Mammary epithelial cell (primary cell): ENCODE measurements at regions of chr1 and their contacts with region 1.

Region 1: GRCh38 chr1:90391126-90391525 is 326.0 kb downstream of the BARHL2 start:
- DNase-seq: peak; percentile 46
- H3K4me3 ChIP-seq: no peak overlapping the region
- H3K27ac ChIP-seq: no peak overlapping the region
- H3K4me1 ChIP-seq: peaks cover 22% of the 10 kb centered on the region
- H3K27me3 ChIP-seq: no peaks in the 10 kb centered on the region
- CTCF ChIP-seq: no peak

Region 2: GRCh38 chr1:90340606-90341005 is 50.5 kb before region 1 on chr1:
- CTCF ChIA-PET with region 1: no interaction called
- dilution Hi-C with region 1: no loop called
- in situ Hi-C with region 1: no loop called
- intact Hi-C with region 1: no loop called
- DNase-seq: no peak
- H3K4me3 ChIP-seq: no peak overlapping the region
- H3K27ac ChIP-seq: no peak overlapping the region
- H3K4me1 ChIP-seq: no peaks in the 10 kb centered on the region
- H3K27me3 ChIP-seq: no peaks in the 10 kb centered on the region
- CTCF ChIP-seq: no peak

Region 3: DNA sequence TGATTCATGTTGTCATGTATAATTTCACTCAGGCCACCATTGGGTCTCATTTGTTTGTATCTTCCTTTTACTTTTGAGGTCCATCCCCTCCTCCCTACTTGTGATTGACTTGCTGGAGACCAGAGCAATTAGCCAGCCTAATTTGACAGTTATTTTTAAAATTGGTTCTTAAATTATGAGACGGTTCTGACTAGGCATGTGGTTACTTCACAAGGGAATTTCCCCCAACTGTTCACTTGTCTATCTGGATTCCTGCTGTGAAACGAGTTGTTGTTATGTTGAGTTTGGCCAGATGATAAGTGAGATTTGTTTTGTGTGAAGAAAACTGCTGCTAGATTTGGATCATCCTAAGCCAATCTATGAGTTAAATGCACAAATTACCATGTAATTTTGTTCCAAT is 33.1 kb before region 1 on chr1:
- CTCF ChIA-PET with region 1: no interaction called
- dilution Hi-C with region 1: loop called (anchors 5 kb)
- in situ Hi-C with region 1: no loop called
- intact Hi-C with region 1: no loop called
- DNase-seq: peak; percentile 41
- H3K4me3 ChIP-seq: no peak overlapping the region
- H3K27ac ChIP-seq: no peak overlapping the region
- H3K4me1 ChIP-seq: no peaks in the 10 kb centered on the region
- H3K27me3 ChIP-seq: peaks cover 3% of the 10 kb centered on the region
- CTCF ChIP-seq: no peak

Region 4: DNA sequence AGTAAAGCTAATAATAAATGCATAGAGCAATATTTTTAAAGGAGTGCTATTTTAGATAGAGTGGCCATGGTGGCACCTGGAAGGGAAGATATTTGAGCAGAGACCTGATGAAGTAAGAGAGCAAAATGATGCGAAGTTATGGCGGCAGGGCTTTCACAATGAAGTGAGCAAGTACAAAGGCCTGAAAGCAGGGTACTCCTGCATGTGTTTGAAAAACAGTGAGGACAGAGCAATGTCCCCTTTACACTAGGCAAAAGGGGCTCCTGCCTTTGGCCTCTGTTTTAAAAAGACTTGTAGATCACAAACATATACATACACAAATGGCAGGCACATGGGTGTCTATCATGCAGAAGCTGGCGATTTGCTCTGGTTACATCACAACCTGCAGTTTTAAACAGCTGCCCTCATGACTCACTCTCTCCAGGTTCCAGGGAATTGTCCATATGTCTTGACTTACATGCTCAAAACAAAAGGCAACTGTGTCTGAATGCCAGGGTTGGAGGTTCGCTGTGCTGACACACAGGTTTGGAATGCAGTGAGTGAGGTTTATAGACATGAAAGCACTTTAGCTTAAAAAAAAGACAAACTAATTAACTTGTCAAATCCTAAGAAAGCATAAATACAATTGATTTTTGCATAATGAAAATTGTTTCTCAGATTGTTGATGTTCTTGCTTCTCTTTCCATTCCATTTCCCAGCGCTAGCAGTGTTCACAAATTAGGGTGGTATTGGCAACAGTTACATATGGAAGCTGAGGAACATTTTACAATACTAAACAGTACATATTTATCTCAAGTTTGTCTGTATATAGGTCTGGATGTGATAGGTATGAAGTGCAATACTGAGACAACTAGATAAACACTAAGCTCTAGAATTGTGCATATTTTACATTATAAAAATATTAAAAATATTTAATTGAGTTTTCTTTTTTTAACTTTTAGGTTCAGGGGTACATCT is 12.0 kb after region 1 on chr1:
- CTCF ChIA-PET with region 1: no interaction called
- dilution Hi-C with region 1: no loop called
- in situ Hi-C with region 1: no loop called
- intact Hi-C with region 1: loop called (anchors 1 kb)
- DNase-seq: peak; percentile 98
- H3K4me3 ChIP-seq: no peak overlapping the region
- H3K27ac ChIP-seq: peak overlapping the region; percentile 71
- H3K4me1 ChIP-seq: peaks cover 43% of the 10 kb centered on the region
- H3K27me3 ChIP-seq: no peaks in the 10 kb centered on the region
- CTCF ChIP-seq: no peak